HEK293 (cell line): ENCODE measurements at regions of chr10 and their contacts with region 1.

Region 1: DNA sequence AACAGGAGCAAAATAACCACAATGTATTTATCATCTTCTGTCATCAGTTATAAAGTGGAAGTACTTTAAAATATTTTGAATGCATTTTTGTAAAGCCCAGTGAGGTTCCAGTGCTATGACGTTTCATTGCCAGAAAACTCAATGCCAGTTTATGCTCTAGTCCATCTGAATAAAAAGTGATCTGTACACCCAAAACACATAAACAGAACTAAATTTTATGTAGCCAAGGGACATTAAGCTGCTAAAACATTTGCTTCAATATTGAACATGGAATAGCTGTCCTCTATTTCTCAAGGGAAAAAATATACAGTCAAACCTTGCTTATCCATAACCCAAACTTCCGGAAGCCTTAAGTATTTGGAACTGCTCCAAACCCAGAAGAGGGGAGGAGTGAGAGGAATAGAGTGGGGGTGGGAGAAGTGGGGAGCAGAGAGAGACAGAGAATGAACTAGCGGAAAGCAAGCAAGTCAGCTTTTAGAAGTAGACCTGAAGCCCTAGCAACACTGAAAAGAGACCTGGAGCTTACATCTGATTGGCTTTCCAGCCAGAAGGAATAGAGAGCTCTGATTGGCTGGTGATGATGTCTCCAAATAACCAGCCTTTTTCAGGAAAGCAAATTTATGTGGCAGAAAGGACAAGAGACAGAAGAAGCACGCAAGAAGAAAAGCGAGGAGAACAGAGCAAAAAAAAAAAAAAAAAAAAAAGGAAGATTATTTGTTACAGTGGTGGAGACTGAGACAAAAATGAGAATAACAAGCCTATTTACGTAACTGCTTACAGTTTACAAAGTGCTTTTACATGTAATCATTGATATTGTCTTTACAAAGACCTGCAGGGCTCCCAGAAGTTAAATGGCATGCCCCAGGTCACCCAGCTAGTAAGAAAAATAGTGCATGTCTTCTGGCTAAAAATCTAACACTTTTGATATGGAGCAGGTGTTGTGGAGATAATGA is 196.0 kb downstream of the RNLS start:
- H3K4me3 ChIP-seq: no peak overlapping the region
- H3K27ac ChIP-seq: peak overlapping the region; percentile 60
- H3K4me1 ChIP-seq: peaks cover 27% of the 10 kb centered on the region
- CTCF ChIP-seq: no peak

Region 2: DNA sequence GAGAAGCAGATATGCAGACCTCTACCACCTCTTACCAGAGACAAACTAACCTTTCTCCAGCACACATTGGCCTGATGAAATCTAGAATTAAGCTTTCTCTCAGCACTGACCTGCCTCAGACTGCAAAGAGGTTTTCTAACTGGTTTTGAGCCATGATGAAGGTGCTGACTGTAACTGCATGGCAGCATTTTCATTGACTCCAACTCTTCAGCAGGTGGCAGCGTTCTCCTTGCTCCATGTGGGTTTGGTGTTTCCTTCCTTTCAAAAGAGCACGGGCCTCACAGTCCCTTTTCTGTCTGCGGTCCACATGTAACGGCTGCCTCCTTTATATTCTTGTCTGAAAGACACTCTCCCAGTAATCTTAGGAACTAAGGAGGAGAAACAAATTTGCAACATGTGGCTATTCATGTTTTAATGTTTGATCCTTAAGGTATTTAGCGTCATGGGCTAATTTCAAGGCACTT is 536.3 kb before region 1 on chr10:
- CTCF ChIA-PET with region 1: interaction called, 26 read pairs
- POLR2A ChIA-PET with region 1: no interaction called
- H3K4me3 ChIP-seq: no peak overlapping the region
- H3K27ac ChIP-seq: no peak overlapping the region
- H3K4me1 ChIP-seq: peaks cover 17% of the 10 kb centered on the region
- CTCF ChIP-seq: peak; percentile 59; the same call in 1 of the 2 replicates

Region 3: GRCh38 chr10:88181902-88182600 is 205.0 kb before region 1 on chr10:
- CTCF ChIA-PET with region 1: interaction called, 3 read pairs
- POLR2A ChIA-PET with region 1: interaction called, 12 read pairs
- H3K4me3 ChIP-seq: no peak overlapping the region
- H3K27ac ChIP-seq: 0 out of 2 replicates have a peak overlapping the region, but pooled peaks have one; percentile 7
- H3K4me1 ChIP-seq: peaks cover 8% of the 10 kb centered on the region
- CTCF ChIP-seq: no peak

Region 4: GRCh38 chr10:88553116-88553752 is 166.1 kb after region 1 on chr10:
- CTCF ChIA-PET with region 1: interaction called, 10 read pairs
- POLR2A ChIA-PET with region 1: no interaction called
- H3K4me3 ChIP-seq: no peak overlapping the region
- H3K27ac ChIP-seq: no peak overlapping the region
- H3K4me1 ChIP-seq: no peaks in the 10 kb centered on the region
- CTCF ChIP-seq: 0 out of 2 replicates have a peak, but pooled peaks have one; percentile 41